IMR-90 (cell line): ENCODE measurements at regions of chr7 and their contacts with region 1.

Region 1: DNA sequence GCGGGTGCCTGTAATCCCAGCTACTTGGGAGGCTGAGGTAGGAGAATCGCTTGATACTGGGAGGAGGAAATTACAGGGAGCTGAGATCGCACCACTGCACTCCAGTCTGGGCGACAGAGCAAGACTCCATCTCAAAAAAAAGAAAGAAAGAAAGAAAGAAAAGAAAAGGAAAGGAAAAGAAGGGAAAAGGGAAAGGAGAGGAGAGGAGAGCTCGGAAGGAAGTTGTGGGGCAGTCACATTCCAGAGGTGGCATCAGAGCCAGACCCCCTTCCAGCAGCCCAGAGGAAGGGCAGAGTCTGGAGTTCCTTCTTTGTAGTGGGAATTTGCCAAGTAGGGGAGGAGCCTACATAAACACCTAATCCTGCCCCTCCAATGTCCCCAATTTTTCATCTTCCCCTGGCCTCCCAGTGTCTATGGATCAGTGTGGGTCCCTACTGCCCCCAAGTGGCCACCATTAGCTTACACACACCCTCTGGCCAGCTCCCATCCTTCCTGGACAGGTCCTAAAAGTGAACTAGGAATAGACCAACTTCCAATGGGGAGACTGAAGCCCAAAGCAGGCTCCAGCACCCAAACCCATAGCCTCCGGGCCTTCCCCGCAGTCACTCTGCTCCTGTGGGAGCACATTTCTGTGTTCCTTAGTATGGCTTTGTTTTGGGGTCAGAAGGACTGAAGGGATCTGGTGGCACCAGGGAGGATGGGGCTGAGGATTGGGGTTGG is 39.6 kb upstream of the HSPB1 start:
- DNase-seq: peak; percentile 60
- ATAC-seq: peak; percentile 92
- H3K4me3 ChIP-seq: no peak overlapping the region
- H3K27ac ChIP-seq: no peak overlapping the region
- H3K4me1 ChIP-seq: no peaks in the 10 kb centered on the region
- H3K27me3 ChIP-seq: peaks cover 33% of the 10 kb centered on the region
- CTCF ChIP-seq: peak; percentile 81
- POLR2A ChIP-seq: no peak
- RAD21 ChIP-seq: peak; percentile 78

Region 2: GRCh38 chr7:76179686-76180085 is 83.2 kb before region 1 on chr7:
- CTCF ChIA-PET with region 1: interaction called, 14 read pairs
- POLR2A ChIA-PET with region 1: no interaction called
- dilution Hi-C with region 1: no loop called
- in situ Hi-C with region 1: no loop called
- intact Hi-C with region 1: loop called (anchors 1 kb)
- DNase-seq: no peak
- ATAC-seq: no peak
- H3K4me3 ChIP-seq: no peak overlapping the region
- H3K27ac ChIP-seq: no peak overlapping the region
- H3K4me1 ChIP-seq: no peaks in the 10 kb centered on the region
- H3K27me3 ChIP-seq: no peaks in the 10 kb centered on the region
- CTCF ChIP-seq: no peak
- POLR2A ChIP-seq: no peak
- RAD21 ChIP-seq: no peak